Activated CD4-positive, alpha-beta T cell treated with anti-CD3 and anti-CD28 coated beads, Interleukin-2, amount 10 ng/mL, durations not matched to agents 24 days and 14 days (primary cell): ENCODE measurements at regions of chr3 and their contacts with region 1.

Region 1: DNA sequence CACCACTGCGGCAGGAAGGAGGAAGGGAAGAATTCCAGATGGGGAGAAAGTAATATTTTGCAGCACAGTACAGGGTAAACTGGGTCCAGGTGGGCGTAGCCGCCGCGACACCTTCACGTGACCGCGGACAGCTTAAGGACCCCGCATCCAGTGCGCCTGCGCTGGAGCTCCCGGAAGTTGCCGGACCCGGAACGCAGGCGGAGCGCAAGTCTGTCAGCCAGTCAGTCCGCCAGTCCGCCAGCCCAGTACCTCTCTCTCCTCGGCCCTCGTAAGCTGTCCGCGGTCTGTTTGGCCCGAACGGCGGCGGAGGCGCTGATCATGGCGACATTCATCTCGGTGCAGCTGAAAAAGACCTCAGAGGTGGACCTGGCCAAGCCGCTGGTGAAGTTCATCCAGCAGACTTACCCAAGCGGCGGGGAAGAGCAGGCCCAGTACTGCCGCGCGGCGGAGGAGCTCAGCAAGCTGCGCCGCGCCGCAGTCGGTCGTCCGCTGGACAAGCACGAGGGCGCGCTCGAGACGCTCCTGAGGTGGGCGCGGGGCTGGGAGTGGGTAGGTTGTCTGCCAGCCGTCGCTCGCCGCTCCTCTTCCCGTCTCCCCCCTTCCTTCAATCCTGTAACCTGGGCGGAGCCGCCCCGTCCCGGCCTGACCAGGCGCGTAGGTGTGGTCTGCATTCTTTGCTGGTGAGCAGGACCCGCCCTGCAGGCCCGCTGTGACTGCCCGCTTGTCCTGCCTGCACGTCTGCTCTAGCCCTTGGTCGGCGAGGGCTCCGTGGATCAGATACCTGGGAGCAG is at the start of gene PDCD6IP:
- DNase-seq: peak; percentile 97
- H3K4me3 Mint-ChIP-seq: peak within 1 kb of the TSS; percentile 96
- H3K27ac Mint-ChIP-seq: peak within 1 kb of the TSS; percentile 91
- H3K4me1 Mint-ChIP-seq: peaks cover 39% of the 10 kb centered on the region
- H3K27me3 Mint-ChIP-seq: peaks cover 4% of the 10 kb centered on the region
- total RNA-seq, gene PDCD6IP: 175 and 189 TPM in 2 replicates

Region 2: DNA sequence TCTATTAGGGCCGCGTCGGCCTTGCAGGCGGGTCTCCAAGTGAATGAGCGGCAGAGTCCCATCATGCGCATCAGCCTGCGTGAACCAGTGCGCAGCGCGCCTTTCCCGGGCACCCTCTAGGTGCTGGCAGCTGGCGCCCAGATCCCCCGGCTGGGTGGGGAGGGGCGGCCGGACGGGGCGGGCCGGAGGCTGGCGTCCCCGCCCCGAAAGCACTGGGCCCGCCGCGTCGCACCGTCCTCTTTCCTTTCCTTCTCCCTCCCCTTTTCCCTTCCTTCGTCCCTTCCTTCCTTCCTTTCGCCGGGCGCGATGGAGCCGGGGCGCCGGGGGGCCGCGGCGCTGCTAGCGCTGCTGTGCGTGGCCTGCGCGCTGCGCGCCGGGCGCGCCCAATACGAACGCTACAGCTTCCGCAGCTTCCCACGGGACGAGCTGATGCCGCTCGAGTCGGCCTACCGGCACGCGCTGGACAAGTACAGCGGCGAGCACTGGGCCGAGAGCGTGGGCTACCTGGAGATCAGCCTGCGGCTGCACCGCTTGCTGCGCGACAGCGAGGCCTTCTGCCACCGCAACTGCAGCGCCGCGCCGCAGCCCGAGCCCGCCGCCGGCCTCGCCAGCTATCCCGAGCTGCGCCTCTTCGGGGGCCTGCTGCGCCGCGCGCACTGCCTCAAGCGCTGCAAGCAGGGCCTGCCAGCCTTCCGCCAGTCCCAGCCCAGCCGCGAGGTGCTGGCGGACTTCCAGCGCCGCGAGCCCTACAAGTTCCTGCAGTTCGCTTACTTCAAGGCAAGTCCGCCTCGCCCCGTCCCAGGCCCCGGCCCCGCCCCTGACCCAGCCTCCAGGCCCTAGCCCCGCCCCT is 684.6 kb before region 1 on chr3 and contains the start of gene CRTAP:
- intact Hi-C with region 1: no loop called
- DNase-seq: peak; percentile 95
- H3K4me3 Mint-ChIP-seq: peak within 1 kb of the TSS; percentile 84
- H3K27ac Mint-ChIP-seq: peak within 1 kb of the TSS; percentile 81
- H3K4me1 Mint-ChIP-seq: peaks cover 16% of the 10 kb centered on the region
- H3K27me3 Mint-ChIP-seq: peaks cover 2% of the 10 kb centered on the region
- total RNA-seq, gene CRTAP: 33.1 and 34.2 TPM in 2 replicates

Region 3: GRCh38 chr3:33717866-33718594 is 80.6 kb before region 1 on chr3 and contains the start of gene CLASP2:
- intact Hi-C with region 1: loop called (anchors 1 kb)
- DNase-seq: peak; percentile 96
- H3K4me3 Mint-ChIP-seq: no peak within 1 kb of the TSS
- H3K27ac Mint-ChIP-seq: peak within 1 kb of the TSS; percentile 88
- H3K4me1 Mint-ChIP-seq: peaks cover 12% of the 10 kb centered on the region
- H3K27me3 Mint-ChIP-seq: peaks cover 6% of the 10 kb centered on the region
- total RNA-seq, gene CLASP2: 65.3 and 65.8 TPM in 2 replicates

Region 4: DNA sequence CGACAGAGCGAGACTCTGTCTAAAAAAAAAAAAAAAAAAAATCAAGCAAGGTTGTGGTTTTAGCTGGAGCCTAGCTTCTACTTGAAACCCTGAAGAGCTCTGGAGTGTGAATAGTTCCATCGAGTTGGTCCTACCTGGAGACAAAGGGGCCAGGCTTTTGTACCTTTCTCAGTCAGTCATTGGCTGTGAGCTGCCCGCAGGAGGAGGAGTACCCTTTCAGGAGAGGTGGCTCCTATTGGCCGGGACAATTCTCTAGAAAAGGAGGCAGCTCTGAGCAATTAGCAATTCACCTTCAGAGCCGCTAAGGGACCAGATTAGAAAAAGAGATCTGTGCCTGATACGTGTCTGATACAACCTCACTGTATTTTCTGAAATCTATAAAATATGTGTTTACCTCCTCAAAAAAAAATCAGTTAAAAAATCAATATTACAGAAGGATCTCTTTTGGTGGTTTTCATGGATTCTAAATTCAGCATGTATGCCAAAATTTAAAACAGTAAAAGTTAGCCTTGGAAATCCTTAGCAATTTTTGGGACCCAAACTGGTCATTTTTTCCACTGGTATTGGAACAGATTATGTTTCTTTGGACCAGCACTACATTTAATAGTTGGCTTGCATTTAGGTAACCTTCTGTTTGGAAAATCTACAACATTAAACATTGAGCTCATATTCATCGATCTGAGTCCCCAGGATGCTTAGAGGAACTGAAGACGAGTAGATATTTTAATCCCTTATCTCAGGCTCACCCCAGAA is 29.9 kb before region 1 on chr3:
- intact Hi-C with region 1: no loop called
- DNase-seq: no peak
- H3K4me3 Mint-ChIP-seq: no peak overlapping the region
- H3K27ac Mint-ChIP-seq: no peak overlapping the region
- H3K4me1 Mint-ChIP-seq: no peaks in the 10 kb centered on the region
- H3K27me3 Mint-ChIP-seq: peaks cover 6% of the 10 kb centered on the region

Region 5: GRCh38 chr3:33779751-33780150 is 18.9 kb before region 1 on chr3:
- intact Hi-C with region 1: no loop called
- DNase-seq: no peak
- H3K4me3 Mint-ChIP-seq: no peak overlapping the region
- H3K27ac Mint-ChIP-seq: no peak overlapping the region
- H3K4me1 Mint-ChIP-seq: no peaks in the 10 kb centered on the region
- H3K27me3 Mint-ChIP-seq: peaks cover 15% of the 10 kb centered on the region

Region 6: GRCh38 chr3:33855884-33856546 is 57.4 kb after region 1 on chr3:
- intact Hi-C with region 1: loop called (anchors 5 kb)
- DNase-seq: no peak
- H3K4me3 Mint-ChIP-seq: no peak overlapping the region
- H3K27ac Mint-ChIP-seq: peak overlapping the region; percentile 14
- H3K4me1 Mint-ChIP-seq: peaks cover 18% of the 10 kb centered on the region
- H3K27me3 Mint-ChIP-seq: no peaks in the 10 kb centered on the region